ENCODE measurements at regions of chr13 and their contacts with region 1.

Region 1: DNA sequence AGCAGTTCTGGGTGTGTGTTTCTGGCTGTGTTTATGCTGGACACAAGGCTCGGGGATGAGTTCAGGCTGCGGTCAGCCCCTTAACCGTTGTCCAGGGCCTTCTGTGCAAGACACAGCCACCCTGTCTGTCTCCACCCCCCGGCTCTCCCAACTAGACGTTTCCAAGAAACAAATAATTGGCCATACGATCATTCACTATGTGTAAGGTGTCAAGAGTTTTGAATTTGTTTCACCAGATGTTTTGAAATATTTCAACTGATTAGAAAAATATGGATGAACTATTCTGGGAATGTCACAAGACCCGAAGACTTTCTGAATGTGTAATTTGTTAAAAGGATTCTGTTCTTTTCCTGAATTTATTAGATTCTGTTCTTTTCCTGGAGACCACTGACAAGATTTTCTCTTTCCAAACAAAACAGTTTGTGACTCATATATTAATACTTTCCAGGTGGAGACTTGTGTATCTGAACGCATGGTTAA is 318.2 kb downstream of the MYO16 start:
- DNase-seq: no peak
- ATAC-seq: no peak
- H3K4me3 ChIP-seq: no peak overlapping the region
- H3K4me3 Mint-ChIP-seq: no peak overlapping the region
- H3K27ac ChIP-seq: no peak overlapping the region
- H3K27ac Mint-ChIP-seq: no peak overlapping the region
- H3K4me1 ChIP-seq: no peaks in the 10 kb centered on the region
- H3K4me1 Mint-ChIP-seq: no peaks in the 10 kb centered on the region
- H3K27me3 ChIP-seq: no peaks in the 10 kb centered on the region
- H3K27me3 Mint-ChIP-seq: no peaks in the 10 kb centered on the region
- CTCF ChIP-seq: no peak

Region 2: DNA sequence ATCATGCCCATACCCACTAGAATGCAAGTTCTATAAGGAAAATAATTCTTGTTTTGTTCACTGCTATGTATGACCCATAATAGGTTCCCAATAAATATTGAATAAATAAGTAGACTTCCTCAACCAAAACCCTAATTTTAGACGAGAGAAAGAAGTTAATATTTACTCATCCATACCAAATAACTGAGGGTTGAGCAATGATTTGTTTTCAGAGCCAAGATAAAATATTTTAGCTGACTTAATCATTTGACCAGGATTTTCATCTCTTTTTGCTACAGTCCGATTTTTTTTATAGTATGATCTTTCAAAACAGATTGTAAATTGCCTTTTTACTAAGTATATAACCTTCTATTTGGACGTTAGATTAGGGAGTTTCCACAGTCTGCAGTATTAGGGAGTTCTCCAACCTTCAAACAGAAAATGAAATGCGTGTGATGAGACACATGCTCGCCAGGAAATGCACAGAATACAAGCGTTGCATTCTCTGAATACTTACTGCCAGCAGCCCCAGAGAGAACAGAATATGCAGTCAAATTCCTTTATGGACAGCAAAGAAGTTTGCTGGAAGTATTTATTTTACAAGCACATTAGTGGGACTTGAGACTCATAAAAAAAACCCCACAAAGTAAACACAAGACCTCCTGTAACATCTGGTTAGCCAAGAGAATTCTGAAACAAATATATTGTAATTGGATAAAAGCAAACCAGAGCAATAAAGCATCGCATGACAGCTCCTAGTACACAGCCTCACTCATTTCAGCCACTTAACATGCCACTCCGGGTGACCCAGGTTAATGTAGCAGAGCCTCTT is 88.2 kb before region 1 on chr13:
- CTCF ChIA-PET with region 1: no interaction called
- POLR2A ChIA-PET with region 1: no interaction called
- intact Hi-C with region 1: no loop called
- DNase-seq: no peak
- ATAC-seq: no peak
- H3K4me3 ChIP-seq: no peak overlapping the region
- H3K4me3 Mint-ChIP-seq: no peak overlapping the region
- H3K27ac ChIP-seq: no peak overlapping the region
- H3K27ac Mint-ChIP-seq: no peak overlapping the region
- H3K4me1 ChIP-seq: no peaks in the 10 kb centered on the region
- H3K4me1 Mint-ChIP-seq: no peaks in the 10 kb centered on the region
- H3K27me3 ChIP-seq: no peaks in the 10 kb centered on the region
- H3K27me3 Mint-ChIP-seq: no peaks in the 10 kb centered on the region
- CTCF ChIP-seq: no peak

Region 3: GRCh38 chr13:108924134-108924533 is 23.5 kb before region 1 on chr13:
- CTCF ChIA-PET with region 1: no interaction called
- POLR2A ChIA-PET with region 1: no interaction called
- intact Hi-C with region 1: loop called in 1 of 2 experiments (anchors 1 kb)
- DNase-seq: no peak
- ATAC-seq: no peak
- H3K4me3 ChIP-seq: no peak overlapping the region
- H3K4me3 Mint-ChIP-seq: no peak overlapping the region
- H3K27ac ChIP-seq: no peak overlapping the region
- H3K27ac Mint-ChIP-seq: no peak overlapping the region
- H3K4me1 ChIP-seq: no peaks in the 10 kb centered on the region
- H3K4me1 Mint-ChIP-seq: no peaks in the 10 kb centered on the region
- H3K27me3 ChIP-seq: no peaks in the 10 kb centered on the region
- H3K27me3 Mint-ChIP-seq: no peaks in the 10 kb centered on the region
- CTCF ChIP-seq: no peak

Measured in CD4-positive, alpha-beta T cell (primary cell).